Calu3 (cell line): ENCODE measurements at regions of chrX and their contacts with region 1.

Region 1: DNA sequence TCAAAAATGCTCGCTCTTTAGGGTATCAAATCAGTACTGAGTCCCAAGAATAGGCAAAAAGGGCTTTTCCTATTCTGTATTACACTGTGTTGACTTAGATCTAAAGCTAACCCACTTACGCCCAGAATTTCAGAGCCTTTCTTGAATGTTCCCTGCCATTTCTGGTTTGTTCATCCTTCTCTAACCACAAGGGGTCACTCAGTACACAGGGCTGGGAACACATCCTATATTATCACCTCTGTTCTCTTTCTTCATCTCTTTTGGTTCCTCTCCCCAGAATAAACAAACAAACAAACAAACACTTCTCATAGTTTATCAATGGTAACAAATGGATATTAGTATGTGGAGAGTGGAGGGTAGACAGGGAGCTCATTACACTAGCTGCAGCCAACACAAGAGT is 25.5 kb upstream of the MORC4 start:
- DNase-seq: peak; percentile 14
- H3K4me3 Mint-ChIP-seq: no peak overlapping the region
- H3K27ac Mint-ChIP-seq: no peak overlapping the region
- H3K4me1 Mint-ChIP-seq: no peaks in the 10 kb centered on the region
- H3K27me3 Mint-ChIP-seq: no peaks in the 10 kb centered on the region
- CTCF ChIP-seq: peak; percentile 20

Region 2: DNA sequence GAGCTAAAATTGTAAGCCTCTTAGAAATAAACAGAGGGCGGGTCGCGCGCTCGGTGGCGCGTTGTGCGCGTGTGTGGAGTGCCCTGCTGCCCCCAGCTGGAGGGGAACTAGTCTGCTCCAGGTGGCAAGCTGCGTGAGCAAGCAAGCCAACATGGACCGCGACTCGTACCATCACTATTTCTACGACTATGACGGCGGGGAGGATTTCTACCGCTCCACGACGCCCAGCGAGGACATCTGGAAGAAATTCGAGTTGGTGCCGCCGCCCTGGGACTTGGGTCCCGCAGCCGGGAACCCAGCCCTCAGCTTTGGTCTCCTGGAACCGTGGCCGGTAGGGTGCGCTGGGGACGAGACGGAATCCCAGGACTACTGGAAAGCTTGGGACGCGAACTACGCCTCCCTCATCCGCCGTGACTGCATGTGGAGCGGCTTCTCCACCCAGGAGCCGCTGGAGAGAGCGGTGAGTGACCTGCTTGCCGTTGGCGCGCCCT is 246.9 kb after region 1 on chrX:
- CTCF ChIA-PET with region 1: interaction called, 6 read pairs
- intact Hi-C with region 1: loop called (anchors 5 kb)
- DNase-seq: peak; percentile 61
- H3K4me3 Mint-ChIP-seq: peak overlapping the region; percentile 66
- H3K27ac Mint-ChIP-seq: no peak overlapping the region
- H3K4me1 Mint-ChIP-seq: no peaks in the 10 kb centered on the region
- H3K27me3 Mint-ChIP-seq: no peaks in the 10 kb centered on the region
- CTCF ChIP-seq: peak; percentile 55

Region 3: DNA sequence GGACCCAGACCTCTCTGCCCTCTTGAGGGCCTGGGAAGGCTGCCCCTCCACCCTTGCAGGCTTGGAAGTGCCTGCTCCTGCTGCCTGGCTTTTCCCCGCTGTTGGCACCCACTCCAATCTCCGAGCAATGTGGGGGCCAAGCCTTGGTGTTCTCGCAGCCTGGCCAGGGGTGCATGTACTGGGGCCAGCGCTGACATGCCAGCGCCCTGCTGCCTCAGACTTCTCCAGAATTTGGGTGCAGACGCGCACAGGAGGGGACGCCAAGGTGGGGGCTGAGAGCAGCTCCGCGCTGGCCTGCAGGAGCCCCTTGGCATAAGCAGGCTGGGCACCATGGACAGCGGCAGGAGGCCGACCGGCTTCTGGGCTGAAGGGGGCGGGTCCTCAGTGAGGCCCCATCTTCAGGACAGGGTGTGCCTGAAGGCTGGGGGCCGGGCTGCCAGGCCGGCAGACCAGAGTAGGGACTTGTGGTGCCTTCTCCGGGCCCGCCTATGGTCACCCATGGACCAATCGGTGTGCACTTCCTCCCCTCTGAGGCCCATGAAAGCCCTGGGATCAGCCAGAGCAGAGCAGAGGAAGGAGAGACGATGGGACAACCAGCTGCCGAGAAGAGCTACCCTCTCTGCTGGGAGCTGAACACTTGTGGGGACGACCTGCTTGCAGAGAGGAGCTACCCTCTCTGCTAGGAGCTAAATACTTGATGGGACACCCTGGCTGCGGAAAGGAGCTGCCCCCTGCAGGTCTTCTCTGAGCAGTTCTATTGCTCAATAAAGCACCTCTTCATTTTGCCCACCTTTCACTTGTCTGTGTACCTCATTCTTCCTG is 299.2 kb after region 1 on chrX:
- CTCF ChIA-PET with region 1: interaction called, 3 read pairs
- intact Hi-C with region 1: loop called (anchors 2 kb)
- DNase-seq: peak; percentile 18
- H3K4me3 Mint-ChIP-seq: no peak overlapping the region
- H3K27ac Mint-ChIP-seq: no peak overlapping the region
- H3K4me1 Mint-ChIP-seq: no peaks in the 10 kb centered on the region
- H3K27me3 Mint-ChIP-seq: peaks cover 28% of the 10 kb centered on the region
- CTCF ChIP-seq: peak; percentile 13

Region 4: DNA sequence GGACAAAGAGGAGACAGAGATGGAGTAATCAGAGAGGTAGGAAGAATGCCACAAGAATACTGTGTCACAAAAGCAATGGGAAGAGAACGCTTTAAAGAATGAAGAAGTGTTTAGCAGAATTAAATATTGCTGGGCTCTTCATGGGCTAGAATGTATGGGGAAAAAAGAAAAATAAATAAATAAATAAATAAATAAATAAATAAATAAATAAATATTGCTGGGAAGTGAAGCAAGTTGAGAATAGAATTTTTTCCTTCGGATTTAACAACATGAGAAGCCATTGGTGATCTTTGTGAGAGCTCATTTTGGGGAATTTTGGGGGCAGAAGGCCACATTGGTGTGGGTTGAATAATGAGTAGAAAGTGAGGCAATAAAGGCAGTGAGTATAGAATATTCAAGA is 364.2 kb after region 1 on chrX:
- CTCF ChIA-PET with region 1: no interaction called
- intact Hi-C with region 1: no loop called
- DNase-seq: no peak
- H3K4me3 Mint-ChIP-seq: no peak overlapping the region
- H3K27ac Mint-ChIP-seq: no peak overlapping the region
- H3K4me1 Mint-ChIP-seq: no peaks in the 10 kb centered on the region
- H3K27me3 Mint-ChIP-seq: peaks cover 53% of the 10 kb centered on the region
- CTCF ChIP-seq: no peak

Region 5: GRCh38 chrX:107429090-107429489 is 403.5 kb after region 1 on chrX:
- CTCF ChIA-PET with region 1: no interaction called
- intact Hi-C with region 1: loop called (anchors 1 kb)
- DNase-seq: peak; percentile 45
- H3K4me3 Mint-ChIP-seq: no peak overlapping the region
- H3K27ac Mint-ChIP-seq: no peak overlapping the region
- H3K4me1 Mint-ChIP-seq: no peaks in the 10 kb centered on the region
- H3K27me3 Mint-ChIP-seq: peaks cover 6% of the 10 kb centered on the region
- CTCF ChIP-seq: peak; percentile 32

Region 6: DNA sequence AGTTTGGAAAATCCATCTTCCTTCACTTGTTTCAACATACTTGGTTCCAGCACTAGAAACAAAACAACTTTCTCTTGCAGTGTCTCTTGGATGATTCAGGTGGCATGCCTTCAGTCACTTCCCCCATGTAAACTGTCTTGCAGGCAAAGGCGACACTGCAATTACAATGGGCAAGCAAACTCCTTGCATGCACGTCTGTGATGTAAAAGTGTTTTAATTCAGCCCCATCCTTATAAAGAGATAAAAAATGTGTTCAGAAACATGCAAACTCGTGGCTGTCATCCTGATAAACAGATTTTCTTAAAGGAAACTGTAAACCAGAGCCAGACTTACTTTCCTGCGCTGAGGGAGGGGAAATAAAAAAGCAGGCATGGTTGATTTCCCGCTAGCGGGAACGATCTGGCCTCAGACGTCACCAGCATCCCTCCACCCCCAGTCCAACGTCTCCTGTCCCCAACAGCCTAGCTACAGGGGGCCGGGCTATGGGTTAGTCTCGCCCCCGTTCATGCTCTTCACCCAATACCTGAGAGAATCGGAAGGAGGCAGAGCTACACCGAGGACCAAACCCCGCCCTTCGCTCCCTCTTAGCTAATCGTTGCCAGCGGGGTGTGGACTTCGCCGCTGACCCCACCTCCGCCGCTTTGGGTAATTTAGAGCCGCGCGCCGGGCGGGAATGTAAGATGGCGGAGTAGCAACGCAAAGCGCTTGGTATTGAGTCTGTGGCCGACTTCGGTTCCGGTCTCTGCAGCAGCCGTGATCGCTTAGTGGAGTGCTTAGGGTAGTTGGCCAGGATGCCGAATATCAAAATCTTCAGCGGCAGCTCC is 602.5 kb after region 1 on chrX and contains the start of gene PRPS1:
- CTCF ChIA-PET with region 1: no interaction called
- intact Hi-C with region 1: loop called (anchors 10 kb)
- DNase-seq: peak; percentile 90
- H3K4me3 Mint-ChIP-seq: peak within 1 kb of the TSS; percentile 86
- H3K27ac Mint-ChIP-seq: peak within 1 kb of the TSS; percentile 78
- H3K4me1 Mint-ChIP-seq: peaks cover 10% of the 10 kb centered on the region
- H3K27me3 Mint-ChIP-seq: no peaks in the 10 kb centered on the region
- CTCF ChIP-seq: no peak
- total RNA-seq, gene PRPS1: 62.5 and 72.5 TPM in 2 replicates